Right ventricle myocardium inferior (tissue), 1 donor: ENCODE measurements at regions of chr16 and their contacts with region 1.

Region 1: DNA sequence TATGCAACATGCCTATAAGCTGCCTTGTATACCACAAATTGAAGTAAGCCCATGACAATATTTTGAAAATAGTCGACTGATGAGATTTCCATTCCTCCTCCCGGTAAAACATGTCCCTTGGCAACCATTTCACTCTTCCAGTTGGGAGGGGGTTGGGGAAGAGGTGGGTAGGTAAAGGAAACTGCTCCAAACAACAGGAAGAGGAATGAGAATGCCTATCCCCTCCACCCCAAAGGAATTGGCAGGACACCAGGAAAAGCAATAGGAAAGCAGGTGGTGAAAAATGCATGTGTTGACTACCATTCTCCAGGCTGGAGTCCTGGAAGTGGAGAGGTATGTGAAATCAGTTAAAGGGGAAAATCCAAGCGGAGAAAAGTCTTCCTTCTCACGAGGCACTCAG is 455.9 kb upstream of the PSMD7 start:
- DNase-seq: no peak
- ATAC-seq: no peak

Region 2: GRCh38 chr16:73457851-73458250 is 382.9 kb before region 1 on chr16:
- intact Hi-C with region 1: no loop called
- DNase-seq: no peak
- ATAC-seq: no peak

Region 3: DNA sequence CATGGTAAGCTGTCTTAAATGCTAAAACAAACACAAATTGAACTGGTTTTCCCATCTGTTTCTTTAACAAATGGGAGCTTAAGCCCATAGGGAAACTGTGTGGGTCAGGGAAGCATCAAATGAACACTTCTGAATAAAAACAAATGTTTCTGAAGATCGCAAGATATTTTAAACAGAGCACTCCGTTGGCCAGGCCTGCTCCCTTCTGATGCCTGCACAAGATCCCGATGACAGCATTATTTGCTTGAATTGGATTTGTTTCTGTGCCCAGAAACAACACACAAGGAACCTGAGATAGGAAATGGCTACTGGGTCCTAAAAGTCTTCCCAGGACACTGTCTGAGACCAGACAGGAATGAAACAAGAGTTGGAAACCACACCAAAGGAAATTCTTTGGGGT is 367.0 kb before region 1 on chr16:
- intact Hi-C with region 1: no loop called
- DNase-seq: no peak
- ATAC-seq: no peak

Region 4: GRCh38 chr16:73813527-73813926 is 27.2 kb before region 1 on chr16:
- intact Hi-C with region 1: loop called (anchors 2 kb)
- DNase-seq: no peak
- ATAC-seq: peak; percentile 52

Region 5: DNA sequence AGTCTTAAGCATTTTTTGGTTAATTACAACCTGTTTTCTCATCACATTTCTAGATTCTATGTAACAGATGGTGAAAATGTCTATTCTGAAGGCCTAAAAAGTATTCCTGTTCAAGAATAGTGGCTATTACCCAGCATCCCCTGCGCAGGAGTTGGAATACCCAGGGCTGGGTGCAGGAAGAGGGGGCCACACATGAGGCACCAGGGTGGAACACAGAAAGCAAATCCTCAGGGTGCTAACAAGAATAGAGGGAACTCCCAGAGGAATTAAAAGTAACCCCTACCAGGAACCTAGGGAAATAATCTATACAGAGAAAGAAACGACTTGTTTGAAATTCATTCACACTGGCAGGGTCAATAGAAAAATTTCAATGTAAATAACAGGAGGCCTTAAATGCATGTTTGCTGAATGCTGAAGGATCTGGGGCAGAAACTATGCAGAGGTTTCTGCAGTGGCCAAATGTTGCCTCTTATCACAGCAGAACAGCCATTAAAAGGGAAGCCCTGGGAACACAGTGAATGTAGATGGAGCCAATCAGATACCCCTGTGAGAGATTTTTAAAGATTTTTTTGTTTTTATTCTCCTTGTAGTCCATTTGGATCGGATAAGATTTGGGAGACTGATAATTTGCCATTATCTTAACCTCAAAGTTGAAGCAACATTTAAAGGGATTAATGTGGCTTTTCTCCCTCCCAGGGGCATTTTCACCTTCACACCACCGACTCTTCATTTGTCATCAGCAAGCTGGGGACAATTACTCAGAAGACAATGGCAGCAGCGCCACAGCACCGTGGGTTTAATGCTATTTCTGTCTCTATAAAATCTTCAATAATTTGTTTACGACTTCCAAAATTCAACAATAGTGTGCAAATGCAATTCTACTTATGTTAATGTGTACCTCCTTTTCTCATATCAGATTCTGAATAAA is 259.9 kb after region 1 on chr16:
- intact Hi-C with region 1: no loop called
- DNase-seq: no peak
- ATAC-seq: no peak